ENCODE measurements at regions of chr16 and their contacts with region 1.

Region 1: GRCh38 chr16:25235991-25236390 is 19.2 kb downstream of the AQP8 start:
- DNase-seq: no peak
- H3K4me3 ChIP-seq: no peak overlapping the region
- H3K4me3 Mint-ChIP-seq: no peak overlapping the region
- H3K27ac ChIP-seq: no peak overlapping the region
- H3K27ac Mint-ChIP-seq: no peak overlapping the region
- H3K4me1 ChIP-seq: no peaks in the 10 kb centered on the region
- H3K4me1 Mint-ChIP-seq: no peaks in the 10 kb centered on the region
- H3K27me3 ChIP-seq: no peaks in the 10 kb centered on the region
- H3K27me3 Mint-ChIP-seq: no peaks in the 10 kb centered on the region

Region 2: DNA sequence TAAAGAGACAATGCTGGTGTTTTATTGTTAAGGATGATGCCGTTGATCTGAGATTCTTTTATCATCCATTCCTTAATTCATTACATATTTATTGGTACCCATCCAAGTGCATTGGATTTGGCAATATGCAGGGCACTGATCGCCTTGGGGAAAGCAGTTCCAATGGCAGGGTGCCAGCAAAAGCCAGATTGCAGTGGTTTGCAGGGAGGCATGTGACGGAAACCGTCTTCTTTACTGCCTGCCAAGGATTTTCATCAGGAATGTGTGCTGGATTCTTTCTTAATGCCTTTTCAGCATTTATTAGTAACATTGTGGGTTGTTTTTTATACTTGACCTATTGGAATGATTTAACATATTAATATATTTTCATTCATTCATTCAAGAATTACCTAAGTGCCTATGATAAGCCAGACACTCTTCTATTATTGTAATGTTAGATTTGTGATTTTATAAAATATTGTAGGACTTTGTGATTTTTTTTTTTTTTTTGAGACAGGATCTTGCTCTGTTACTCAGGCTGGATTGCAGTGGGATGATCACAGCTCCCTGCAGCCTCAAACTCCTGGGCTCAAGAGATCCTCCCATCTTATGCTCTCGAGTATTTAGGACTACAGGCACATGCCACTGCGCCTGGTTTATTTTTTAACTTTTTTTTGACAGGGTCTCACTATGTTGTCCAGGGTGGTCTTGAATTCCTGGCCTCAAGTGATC is 599.9 kb before region 1 on chr16:
- CTCF ChIA-PET with region 1: no interaction called
- POLR2A ChIA-PET with region 1: no interaction called
- DNase-seq: no peak
- H3K4me3 ChIP-seq: no peak overlapping the region
- H3K4me3 Mint-ChIP-seq: no peak overlapping the region
- H3K27ac ChIP-seq: no peak overlapping the region
- H3K27ac Mint-ChIP-seq: no peak overlapping the region
- H3K4me1 ChIP-seq: no peaks in the 10 kb centered on the region
- H3K4me1 Mint-ChIP-seq: no peaks in the 10 kb centered on the region
- H3K27me3 ChIP-seq: no peaks in the 10 kb centered on the region
- H3K27me3 Mint-ChIP-seq: peaks cover 0 to 14% of the 10 kb centered on the region in 2 donors

Region 3: DNA sequence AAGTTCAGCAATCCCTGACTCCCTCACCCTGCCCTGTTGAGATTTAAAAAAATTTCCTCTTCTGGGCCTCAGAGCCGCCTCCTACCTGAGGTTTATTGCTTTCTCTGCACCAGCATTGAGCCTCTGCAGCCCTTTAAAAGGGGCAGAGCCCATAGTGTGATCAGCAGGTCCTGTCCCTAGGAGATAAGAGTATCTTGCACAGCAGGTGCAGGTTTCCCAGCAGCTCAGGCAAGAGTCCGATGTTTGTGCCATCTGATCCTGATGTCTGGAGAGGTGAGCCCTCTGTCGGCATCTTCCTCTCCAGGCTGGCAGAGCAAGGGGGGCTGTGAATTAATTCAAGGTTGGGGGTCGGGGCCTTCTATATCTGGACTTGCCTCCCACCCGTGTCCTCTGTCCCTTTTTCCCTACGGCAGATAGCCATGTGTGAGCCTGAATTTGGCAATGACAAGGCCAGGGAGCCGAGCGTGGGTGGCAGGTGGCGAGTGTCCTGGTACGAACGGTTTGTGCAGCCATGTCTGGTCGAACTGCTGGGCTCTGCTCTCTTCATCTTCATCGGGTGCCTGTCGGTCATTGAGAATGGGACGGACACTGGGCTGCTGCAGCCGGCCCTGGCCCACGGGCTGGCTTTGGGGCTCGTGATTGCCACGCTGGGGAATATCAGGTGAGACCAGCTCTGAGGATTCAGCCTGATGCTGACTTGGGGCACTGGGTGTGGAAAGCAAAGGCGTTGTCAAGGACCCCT is 19.0 kb before region 1 on chr16 and contains the start of gene AQP8:
- CTCF ChIA-PET with region 1: interaction called, 12 read pairs
- POLR2A ChIA-PET with region 1: no interaction called
- DNase-seq: no peak
- H3K4me3 ChIP-seq: no peak within 1 kb of the TSS
- H3K4me3 Mint-ChIP-seq: no peak within 1 kb of the TSS
- H3K27ac ChIP-seq: no peak within 1 kb of the TSS
- H3K27ac Mint-ChIP-seq: no peak within 1 kb of the TSS
- H3K4me1 ChIP-seq: no peaks in the 10 kb centered on the region
- H3K4me1 Mint-ChIP-seq: no peaks in the 10 kb centered on the region
- H3K27me3 ChIP-seq: no peaks in the 10 kb centered on the region
- H3K27me3 Mint-ChIP-seq: peaks cover 4 to 6% of the 10 kb centered on the region in 2 donors
- total RNA-seq, gene AQP8: 0.18 TPM in 1 of 2 experiments, not detected in the other

Region 4: DNA sequence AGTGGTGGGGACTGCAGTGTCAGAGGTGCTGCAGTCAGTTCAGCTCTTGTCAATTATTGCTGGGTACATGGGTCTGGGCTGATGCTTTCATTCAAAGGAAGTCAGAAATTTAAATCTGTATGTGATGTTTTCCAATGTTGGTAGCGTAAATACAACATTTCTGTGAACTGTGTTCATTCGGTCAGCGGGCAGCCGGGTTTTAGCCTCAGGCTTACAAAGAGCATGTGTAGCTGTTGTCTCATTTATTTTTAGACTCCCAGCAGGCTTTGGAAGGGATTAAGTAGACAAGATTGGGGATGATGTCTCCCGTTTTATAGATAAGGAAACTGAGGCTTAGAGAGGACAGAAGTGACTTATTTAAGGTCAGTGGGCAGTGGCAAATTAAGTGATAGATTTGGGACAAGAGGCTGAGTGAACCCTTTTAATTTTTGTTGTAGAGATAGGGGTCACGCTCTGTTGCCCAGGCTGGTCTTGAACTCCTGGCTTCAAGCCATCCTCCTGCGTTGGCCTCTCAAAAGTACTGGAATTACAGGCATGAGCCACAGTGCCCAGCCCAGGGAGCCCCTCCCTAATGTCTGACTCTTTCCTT is 11.2 kb before region 1 on chr16:
- CTCF ChIA-PET with region 1: interaction called, 14 read pairs
- POLR2A ChIA-PET with region 1: no interaction called
- DNase-seq: no peak
- H3K4me3 ChIP-seq: no peak overlapping the region
- H3K4me3 Mint-ChIP-seq: no peak overlapping the region
- H3K27ac ChIP-seq: no peak overlapping the region
- H3K27ac Mint-ChIP-seq: peak overlapping the region in 1 of 8 donors; percentile 3
- H3K4me1 ChIP-seq: no peaks in the 10 kb centered on the region
- H3K4me1 Mint-ChIP-seq: no peaks in the 10 kb centered on the region
- H3K27me3 ChIP-seq: no peaks in the 10 kb centered on the region
- H3K27me3 Mint-ChIP-seq: no peaks in the 10 kb centered on the region

Region 5: GRCh38 chr16:25298165-25298872 is 62.3 kb after region 1 on chr16:
- CTCF ChIA-PET with region 1: no interaction called
- POLR2A ChIA-PET with region 1: no interaction called
- DNase-seq: no peak
- H3K4me3 ChIP-seq: no peak overlapping the region
- H3K4me3 Mint-ChIP-seq: no peak overlapping the region
- H3K27ac ChIP-seq: no peak overlapping the region
- H3K27ac Mint-ChIP-seq: peak overlapping the region in 1 of 8 donors; percentile 72
- H3K4me1 ChIP-seq: peaks cover 9% of the 10 kb centered on the region
- H3K4me1 Mint-ChIP-seq: peaks cover 0 to 8% (median 7%) of the 10 kb centered on the region in 3 donors
- H3K27me3 ChIP-seq: no peaks in the 10 kb centered on the region
- H3K27me3 Mint-ChIP-seq: peaks cover 3 to 25% of the 10 kb centered on the region in 2 donors